Posterior vena cava (tissue), 2 donors: ENCODE measurements at regions of chr20 and their contacts with region 1.

Region 1: GRCh38 chr20:41373931-41374920 is 7.6 kb upstream of the EMILIN3 start:
- DNase-seq: peak; percentile 65

Region 2: DNA sequence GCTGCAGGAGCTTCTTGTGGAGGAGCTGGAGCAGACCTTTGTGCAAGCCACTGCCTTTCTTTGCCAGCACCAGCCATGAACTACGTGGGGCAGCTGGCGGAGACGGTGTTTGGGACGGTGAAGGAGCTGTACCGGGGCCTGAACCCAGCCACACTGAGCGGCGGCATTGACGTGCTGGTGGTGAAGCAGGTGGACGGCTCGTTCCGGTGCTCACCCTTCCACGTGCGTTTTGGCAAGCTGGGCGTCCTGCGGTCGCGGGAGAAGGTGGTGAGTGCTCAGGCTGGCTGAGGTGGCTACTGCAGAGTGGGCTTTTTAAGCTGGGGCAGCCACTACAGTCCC is 28.5 kb before region 1 on chr20:
- intact Hi-C with region 1: loop called in 1 of 2 experiments (anchors 1 kb)
- DNase-seq: peak; percentile 76

Region 3: DNA sequence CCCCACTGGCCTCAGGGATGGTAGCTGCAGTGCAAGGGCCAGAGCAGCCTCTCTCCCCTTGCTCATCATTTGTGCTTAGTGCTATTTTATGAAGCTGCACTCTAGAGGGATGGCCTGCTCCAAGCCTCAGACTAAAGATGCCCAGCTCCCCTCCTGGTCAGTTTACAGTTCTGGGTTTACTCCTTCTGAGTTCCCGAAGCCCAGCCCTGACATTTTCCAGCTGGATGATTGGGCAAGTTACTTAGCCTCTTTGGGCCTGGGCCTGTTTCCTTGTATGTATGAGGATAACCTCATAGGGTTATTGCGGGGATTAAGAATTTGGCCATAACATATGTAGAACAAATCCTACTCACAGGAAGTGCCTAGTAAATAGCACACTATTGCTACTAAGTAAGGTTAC is 24.2 kb after region 1 on chr20:
- intact Hi-C with region 1: no loop called
- DNase-seq: no peak